H1 (cell line): ENCODE measurements at regions of chr5 and their contacts with region 1.

Region 1: GRCh38 chr5:132820162-132820754 is 7.2 kb downstream of the SOWAHA start:
- DNase-seq: peak; percentile 75 to 97
- H3K4me3 ChIP-seq: no peak overlapping the region
- H3K27ac ChIP-seq: no peak overlapping the region
- H3K4me1 ChIP-seq: peaks cover 0 to 13% (median 11%) of the 10 kb centered on the region in 4 experiments; a peak in 6 of 7 replicates
- H3K27me3 ChIP-seq: peaks cover 4 to 32% (median 26%) of the 10 kb centered on the region in 4 experiments
- CTCF ChIP-seq: peak in 2 of 3 experiments; percentile 93 to 94; a peak in 3 of 4 replicates
- EP300 ChIP-seq: no peak
- POLR2A ChIP-seq: no peak
- RAD21 ChIP-seq: peak; percentile 89 to 93

Region 2: GRCh38 chr5:132526290-132526973 is 293.8 kb before region 1 on chr5:
- CTCF ChIA-PET with region 1: interaction called, 28 read pairs
- POLR2A ChIA-PET with region 1: no interaction called
- DNase-seq: peak; percentile 21 to 74
- H3K4me3 ChIP-seq: peak overlapping the region in 1 of 4 experiments; percentile 33; a peak in 1 of 8 replicates
- H3K27ac ChIP-seq: no peak overlapping the region
- H3K4me1 ChIP-seq: no peaks in the 10 kb centered on the region
- H3K27me3 ChIP-seq: no peaks in the 10 kb centered on the region
- CTCF ChIP-seq: peak; percentile 31 to 80 (median 69)
- EP300 ChIP-seq: no peak
- POLR2A ChIP-seq: no peak
- RAD21 ChIP-seq: peak; percentile 60 to 63

Region 3: DNA sequence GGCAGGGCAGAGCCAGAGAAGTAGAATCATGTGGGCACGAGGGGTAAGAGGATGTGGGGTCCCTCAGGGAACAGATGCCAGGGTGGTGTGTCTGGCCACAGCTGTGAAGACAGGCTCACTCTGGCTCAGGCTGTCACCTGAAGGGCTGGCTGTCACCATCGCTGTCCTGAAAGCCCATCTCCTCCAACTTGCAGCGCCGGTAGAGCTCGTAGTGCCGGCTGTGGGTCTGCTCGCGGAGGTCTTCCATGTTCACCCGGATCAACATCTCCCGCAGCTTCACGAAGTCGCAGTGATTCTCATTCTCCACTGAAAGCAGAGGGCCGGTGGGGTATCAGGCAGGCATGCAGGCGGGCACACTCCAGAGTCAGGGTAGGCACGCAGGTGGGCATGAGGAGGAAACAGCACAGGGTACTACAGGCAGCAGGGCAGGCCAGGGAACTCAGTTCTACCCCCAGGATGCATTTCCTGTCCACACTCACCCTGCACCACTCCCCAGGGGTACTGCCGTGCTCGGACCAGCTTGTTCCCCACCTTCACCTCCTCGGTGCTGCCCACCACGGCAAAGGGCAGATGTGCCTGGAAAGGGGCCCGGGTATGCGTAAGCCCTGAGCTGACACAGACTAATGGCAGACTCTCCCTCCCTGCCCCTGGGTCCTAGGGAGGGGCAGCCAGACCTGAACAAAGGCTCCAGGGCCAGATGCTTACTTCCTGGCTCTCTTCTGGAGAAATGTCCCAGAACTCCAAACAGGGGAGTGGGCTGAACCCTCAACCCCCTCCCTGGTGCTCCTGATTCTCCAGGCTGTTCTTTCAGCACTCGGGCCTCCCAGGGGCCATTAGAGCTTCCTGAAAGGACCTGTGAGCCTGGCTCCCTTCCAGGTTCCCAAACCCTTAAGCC is 58.7 kb before region 1 on chr5:
- CTCF ChIA-PET with region 1: interaction called, 322 read pairs
- POLR2A ChIA-PET with region 1: interaction called, 3 read pairs
- DNase-seq: no peak
- H3K4me3 ChIP-seq: no peak overlapping the region
- H3K27ac ChIP-seq: no peak overlapping the region
- H3K4me1 ChIP-seq: no peaks in the 10 kb centered on the region
- H3K27me3 ChIP-seq: no peaks in the 10 kb centered on the region
- CTCF ChIP-seq: no peak
- EP300 ChIP-seq: no peak
- POLR2A ChIP-seq: no peak
- RAD21 ChIP-seq: no peak

Region 4: DNA sequence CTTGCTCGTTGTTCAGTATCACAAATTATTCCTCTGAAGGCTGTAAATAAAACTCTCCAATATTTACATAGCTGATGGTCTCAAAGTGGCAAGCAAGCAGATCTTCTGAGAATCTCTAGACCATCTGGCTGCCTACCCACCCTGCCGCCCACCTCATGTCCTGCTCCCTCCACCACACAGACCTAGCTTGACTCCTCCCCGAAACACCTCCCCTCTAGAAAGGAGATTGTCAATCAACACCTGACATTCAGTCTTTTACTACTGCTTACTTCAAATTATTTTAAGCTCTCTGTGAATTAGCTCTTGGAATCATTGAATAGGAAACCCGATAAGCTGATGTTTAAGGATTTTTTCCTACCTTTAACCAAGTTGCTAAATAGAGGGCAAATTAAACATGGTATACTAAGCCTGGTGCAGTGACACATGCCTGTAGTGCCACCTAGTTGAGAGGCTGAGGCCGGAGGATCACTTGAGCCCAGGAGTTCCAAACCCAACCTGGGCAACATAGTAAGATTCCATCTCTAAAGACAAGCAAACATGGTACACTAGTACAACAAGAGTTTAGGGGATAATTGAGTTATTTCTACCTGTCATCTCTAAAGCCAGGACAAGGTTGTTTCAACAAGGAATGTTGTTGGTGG is 18.1 kb before region 1 on chr5:
- CTCF ChIA-PET with region 1: interaction called, 82 read pairs
- POLR2A ChIA-PET with region 1: interaction called, 9 read pairs
- DNase-seq: no peak
- H3K4me3 ChIP-seq: no peak overlapping the region
- H3K27ac ChIP-seq: no peak overlapping the region
- H3K4me1 ChIP-seq: peaks cover 0 to 3% (median 1%) of the 10 kb centered on the region in 4 experiments; a peak in 5 of 7 replicates
- H3K27me3 ChIP-seq: peaks cover 0 to 1% (median 0%) of the 10 kb centered on the region in 4 experiments; a peak in 1 of 7 replicates
- CTCF ChIP-seq: peak in 2 of 3 experiments; percentile 9 to 13; a peak in 2 of 4 replicates
- EP300 ChIP-seq: no peak
- POLR2A ChIP-seq: no peak
- RAD21 ChIP-seq: peak; percentile 22 to 41; a peak in 2 of 4 replicates

Region 5: DNA sequence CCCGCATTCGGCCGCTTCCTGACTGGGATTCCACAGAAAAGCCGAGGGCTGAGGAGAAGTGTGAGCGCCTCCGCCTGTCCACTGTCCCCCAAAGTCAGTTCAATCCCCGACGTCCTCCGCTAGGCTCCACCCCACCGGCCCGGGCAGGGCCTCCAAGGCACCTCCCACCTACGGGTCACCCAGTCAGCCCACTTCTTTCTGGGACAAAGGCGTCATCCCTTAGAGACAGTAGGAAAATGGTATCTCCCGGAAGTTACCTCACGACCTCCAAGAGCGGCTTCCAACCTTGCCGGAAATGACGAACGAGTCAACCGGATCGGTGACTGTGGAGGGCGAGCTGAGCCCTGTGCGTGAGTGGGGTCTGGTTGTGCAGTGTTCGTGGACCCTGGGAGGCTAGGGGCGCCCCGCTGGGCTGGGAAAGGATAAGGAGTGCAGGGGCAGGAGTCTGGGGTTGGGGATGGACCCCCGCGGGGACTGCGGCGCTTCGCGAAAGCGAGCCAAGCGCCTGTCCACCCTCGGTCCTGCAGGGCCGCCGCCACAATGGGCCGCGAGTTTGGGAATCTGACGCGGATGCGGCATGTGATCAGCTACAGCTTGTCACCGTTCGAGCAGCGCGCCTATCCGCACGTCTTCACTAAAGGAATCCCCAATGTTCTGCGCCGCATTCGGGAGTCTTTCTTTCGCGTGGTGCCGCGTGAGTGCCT is 46.2 kb after region 1 on chr5 and contains the starts of genes GDF9 and UQCRQ:
- CTCF ChIA-PET with region 1: interaction called, 465 read pairs
- POLR2A ChIA-PET with region 1: interaction called, 32 read pairs
- DNase-seq: peak; percentile 93 to 97
- H3K4me3 ChIP-seq: peak within 1 kb of the TSS; percentile 80 to 99 (median 88)
- H3K27ac ChIP-seq: peak within 1 kb of the TSS; percentile 93
- H3K4me1 ChIP-seq: peaks cover 4 to 7% (median 6%) of the 10 kb centered on the region in 4 experiments; a peak in 5 of 7 replicates
- H3K27me3 ChIP-seq: no peaks in the 10 kb centered on the region
- CTCF ChIP-seq: peak; percentile 32 to 50 (median 44)
- EP300 ChIP-seq: peak in 1 of 2 experiments; percentile 99; a peak in 2 of 3 replicates
- POLR2A ChIP-seq: peak; percentile 82 to 93; a peak in 2 of 3 replicates
- RAD21 ChIP-seq: peak; percentile 61 to 70
- total RNA-seq, gene GDF9: 0.34 TPM in 1 of 2 replicates, not detected in the other
- total RNA-seq, gene UQCRQ: 282 and 293 TPM in 2 replicates

Region 6: DNA sequence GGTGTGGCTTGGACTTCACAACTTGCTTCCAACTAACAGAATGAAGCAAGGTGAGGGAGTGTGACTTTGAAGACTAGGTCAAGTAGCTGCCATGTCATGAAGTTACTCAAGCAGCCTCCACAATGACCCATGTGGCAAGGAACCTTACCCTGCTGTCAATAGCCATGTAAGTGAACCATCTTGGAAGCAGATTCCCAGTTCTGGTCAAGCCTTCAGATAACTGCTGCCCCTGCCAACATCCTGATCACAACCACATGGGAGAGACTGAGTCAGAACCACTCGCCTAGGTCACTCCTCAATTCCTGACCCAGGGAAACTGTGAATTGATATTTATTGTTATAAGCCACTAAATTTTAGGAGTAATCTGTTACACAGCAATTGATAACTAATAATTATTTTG is 195.2 kb after region 1 on chr5:
- CTCF ChIA-PET with region 1: no interaction called
- POLR2A ChIA-PET with region 1: no interaction called
- DNase-seq: no peak
- H3K4me3 ChIP-seq: no peak overlapping the region
- H3K27ac ChIP-seq: no peak overlapping the region
- H3K4me1 ChIP-seq: no peaks in the 10 kb centered on the region
- H3K27me3 ChIP-seq: no peaks in the 10 kb centered on the region
- CTCF ChIP-seq: no peak
- EP300 ChIP-seq: no peak
- POLR2A ChIP-seq: no peak
- RAD21 ChIP-seq: no peak

Region 7: GRCh38 chr5:133029136-133029815 is 209.0 kb after region 1 on chr5:
- CTCF ChIA-PET with region 1: no interaction called
- POLR2A ChIA-PET with region 1: no interaction called
- DNase-seq: no peak
- H3K4me3 ChIP-seq: no peak overlapping the region
- H3K27ac ChIP-seq: no peak overlapping the region
- H3K4me1 ChIP-seq: no peaks in the 10 kb centered on the region; a peak in 1 of 7 replicates
- H3K27me3 ChIP-seq: no peaks in the 10 kb centered on the region
- CTCF ChIP-seq: no peak
- EP300 ChIP-seq: no peak
- POLR2A ChIP-seq: no peak
- RAD21 ChIP-seq: no peak